ENCODE measurements at regions of chr12 and their contacts with region 1.

Region 1: GRCh38 chr12:87866578-87867292 is 162.5 kb downstream of the C12orf50 start:
- DNase-seq: peak; percentile 50
- ATAC-seq: peak; percentile 71
- H3K4me3 ChIP-seq: no peak overlapping the region
- H3K27ac ChIP-seq: no peak overlapping the region
- H3K4me1 ChIP-seq: no peaks in the 10 kb centered on the region
- H3K27me3 ChIP-seq: no peaks in the 10 kb centered on the region
- CTCF ChIP-seq: peak; percentile 53
- POLR2A ChIP-seq: no peak
- RAD21 ChIP-seq: peak; percentile 51

Region 2: DNA sequence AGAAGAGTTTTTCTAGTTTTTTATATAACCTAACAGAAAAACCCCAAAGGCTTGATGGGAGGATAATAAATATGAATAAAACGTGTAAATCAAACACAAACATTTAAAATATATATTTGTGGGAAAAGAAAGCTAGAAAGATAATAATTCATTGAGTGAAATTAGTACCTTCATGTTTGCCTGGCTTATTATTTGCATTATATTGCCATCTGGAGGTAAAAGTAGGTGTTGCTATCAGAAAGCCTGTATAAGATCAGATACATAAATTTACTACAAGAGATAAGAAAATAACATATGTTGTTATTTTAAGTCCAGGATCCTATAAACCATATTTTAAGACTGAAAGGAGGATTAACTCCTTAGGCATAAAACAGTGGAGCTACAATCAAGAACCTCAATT is 1914.9 kb before region 1 on chr12:
- CTCF ChIA-PET with region 1: no interaction called
- POLR2A ChIA-PET with region 1: no interaction called
- dilution Hi-C with region 1: no loop called
- in situ Hi-C with region 1: no loop called
- intact Hi-C with region 1: loop called (anchors 10 kb)
- DNase-seq: peak; percentile 5
- ATAC-seq: peak; percentile 46; the same call in 1 of the 2 replicates
- H3K4me3 ChIP-seq: no peak overlapping the region
- H3K27ac ChIP-seq: no peak overlapping the region
- H3K4me1 ChIP-seq: no peaks in the 10 kb centered on the region
- H3K27me3 ChIP-seq: no peaks in the 10 kb centered on the region
- CTCF ChIP-seq: peak; percentile 34; the same call in 1 of the 2 replicates
- POLR2A ChIP-seq: no peak
- RAD21 ChIP-seq: peak; percentile 16; the same call in 1 of the 2 replicates

Region 3: DNA sequence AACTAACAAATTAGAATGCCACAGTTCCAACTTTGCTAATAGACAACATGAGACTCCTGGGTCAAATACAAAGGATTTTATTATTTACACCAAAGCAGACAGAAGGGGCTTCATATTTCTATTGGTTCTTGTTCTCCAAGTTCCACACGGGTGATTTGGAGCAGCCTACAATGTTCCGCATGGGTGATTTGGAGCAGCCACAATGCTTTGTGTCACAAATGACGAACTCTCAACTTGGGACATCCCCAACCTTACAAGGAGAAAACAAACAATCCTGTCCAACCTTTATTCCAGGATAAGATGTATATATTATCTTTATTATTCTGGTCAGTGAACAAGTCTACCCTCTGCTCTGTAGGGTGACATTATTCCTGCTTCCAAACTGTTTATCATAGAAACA is 916.3 kb before region 1 on chr12:
- CTCF ChIA-PET with region 1: no interaction called
- POLR2A ChIA-PET with region 1: no interaction called
- dilution Hi-C with region 1: no loop called
- in situ Hi-C with region 1: loop called (anchors 25 kb)
- intact Hi-C with region 1: no loop called
- DNase-seq: no peak
- ATAC-seq: no peak
- H3K4me3 ChIP-seq: no peak overlapping the region
- H3K27ac ChIP-seq: no peak overlapping the region
- H3K4me1 ChIP-seq: no peaks in the 10 kb centered on the region
- H3K27me3 ChIP-seq: no peaks in the 10 kb centered on the region
- CTCF ChIP-seq: no peak
- POLR2A ChIP-seq: no peak
- RAD21 ChIP-seq: no peak

Region 4: GRCh38 chr12:87728931-87729593 is 137.7 kb before region 1 on chr12:
- CTCF ChIA-PET with region 1: no interaction called
- POLR2A ChIA-PET with region 1: no interaction called
- dilution Hi-C with region 1: no loop called
- in situ Hi-C with region 1: no loop called
- intact Hi-C with region 1: no loop called
- DNase-seq: peak; percentile 57
- ATAC-seq: no peak
- H3K4me3 ChIP-seq: no peak overlapping the region
- H3K27ac ChIP-seq: no peak overlapping the region
- H3K4me1 ChIP-seq: no peaks in the 10 kb centered on the region
- H3K27me3 ChIP-seq: no peaks in the 10 kb centered on the region
- CTCF ChIP-seq: no peak
- POLR2A ChIP-seq: no peak
- RAD21 ChIP-seq: no peak

Region 5: GRCh38 chr12:87953256-87953860 is 86.6 kb after region 1 on chr12:
- CTCF ChIA-PET with region 1: interaction called, 3 read pairs
- POLR2A ChIA-PET with region 1: no interaction called
- dilution Hi-C with region 1: no loop called
- in situ Hi-C with region 1: no loop called
- intact Hi-C with region 1: loop called (anchors 1 kb)
- DNase-seq: peak; percentile 71
- ATAC-seq: peak; percentile 77
- H3K4me3 ChIP-seq: no peak overlapping the region
- H3K27ac ChIP-seq: no peak overlapping the region
- H3K4me1 ChIP-seq: no peaks in the 10 kb centered on the region
- H3K27me3 ChIP-seq: no peaks in the 10 kb centered on the region
- CTCF ChIP-seq: peak; percentile 86
- POLR2A ChIP-seq: no peak
- RAD21 ChIP-seq: peak; percentile 94

Region 6: DNA sequence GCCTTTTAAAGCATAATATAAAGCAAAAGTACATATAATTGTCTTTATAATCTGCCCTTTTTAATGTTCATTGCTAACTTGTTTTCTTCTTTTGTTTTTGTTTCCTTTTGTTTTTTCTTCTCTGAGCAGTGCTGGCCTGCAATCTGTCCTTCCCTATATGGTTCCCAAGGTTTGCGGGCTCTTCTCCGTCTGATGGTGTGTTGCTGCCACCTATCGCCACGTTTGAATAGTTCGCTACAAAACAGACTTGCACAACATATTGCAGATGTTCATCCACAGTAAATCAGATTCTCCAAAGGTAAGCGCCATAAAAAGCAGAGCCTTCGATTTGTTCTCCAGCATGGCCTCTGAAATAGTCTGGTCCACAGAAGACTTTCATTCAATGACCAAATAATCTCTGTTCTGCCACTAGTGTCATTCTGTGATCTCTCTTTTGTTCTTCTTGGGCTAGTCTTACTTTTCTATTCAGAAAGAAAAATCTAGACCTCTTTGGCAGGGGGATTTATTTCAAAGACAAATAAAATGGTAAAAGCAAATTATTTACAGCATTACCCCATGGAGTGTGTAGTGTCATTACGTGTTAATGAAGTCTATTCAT is 128.9 kb after region 1 on chr12:
- CTCF ChIA-PET with region 1: no interaction called
- POLR2A ChIA-PET with region 1: no interaction called
- dilution Hi-C with region 1: no loop called
- in situ Hi-C with region 1: no loop called
- intact Hi-C with region 1: loop called (anchors 2 kb)
- DNase-seq: peak; percentile 73
- ATAC-seq: peak; percentile 99
- H3K4me3 ChIP-seq: no peak overlapping the region
- H3K27ac ChIP-seq: no peak overlapping the region
- H3K4me1 ChIP-seq: no peaks in the 10 kb centered on the region
- H3K27me3 ChIP-seq: no peaks in the 10 kb centered on the region; the same call in 1 of the 2 replicates
- CTCF ChIP-seq: peak; percentile 87
- POLR2A ChIP-seq: no peak
- RAD21 ChIP-seq: peak; percentile 92

Region 7: DNA sequence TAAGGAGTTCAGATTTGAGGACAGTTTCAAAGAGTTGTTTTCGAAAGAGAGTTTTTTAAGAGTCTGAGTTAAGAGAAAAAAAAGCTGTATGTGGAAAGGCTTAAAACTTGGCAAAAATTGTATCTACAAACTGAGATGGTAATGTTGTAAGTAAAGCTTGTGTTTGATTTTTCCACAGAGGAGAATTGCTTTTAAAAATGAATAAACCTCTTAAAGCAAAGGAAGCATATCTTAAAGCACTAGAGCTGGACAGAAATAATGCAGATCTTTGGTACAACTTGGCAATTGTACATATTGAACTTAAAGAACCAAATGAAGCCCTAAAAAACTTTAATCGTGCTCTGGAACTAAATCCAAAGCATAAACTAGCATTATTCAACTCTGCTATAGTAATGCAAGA is 325.7 kb after region 1 on chr12:
- CTCF ChIA-PET with region 1: no interaction called
- POLR2A ChIA-PET with region 1: no interaction called
- dilution Hi-C with region 1: no loop called
- in situ Hi-C with region 1: no loop called
- intact Hi-C with region 1: no loop called
- DNase-seq: no peak
- ATAC-seq: no peak
- H3K4me3 ChIP-seq: no peak overlapping the region
- H3K27ac ChIP-seq: no peak overlapping the region
- H3K4me1 ChIP-seq: no peaks in the 10 kb centered on the region
- H3K27me3 ChIP-seq: no peaks in the 10 kb centered on the region
- CTCF ChIP-seq: no peak
- POLR2A ChIP-seq: no peak
- RAD21 ChIP-seq: no peak